CD4-positive, alpha-beta memory T cell (primary cell): ENCODE measurements at regions of chr20 and their contacts with region 1.

Region 1: GRCh38 chr20:45293041-45294002 is 13.3 kb upstream of the RBPJL start:
- DNase-seq: peak; percentile 70 to 77 (median 71)
- H3K4me3 ChIP-seq: peak overlapping the region; percentile 40 to 64
- H3K4me3 Mint-ChIP-seq: peak overlapping the region; percentile 68 to 84 (median 79)
- H3K27ac ChIP-seq: no peak overlapping the region
- H3K27ac Mint-ChIP-seq: no peak overlapping the region
- H3K4me1 ChIP-seq: peaks cover 11% of the 10 kb centered on the region
- H3K4me1 Mint-ChIP-seq: peaks cover 2 to 8% (median 4%) of the 10 kb centered on the region in 4 donors
- H3K27me3 ChIP-seq: no peaks in the 10 kb centered on the region
- H3K27me3 Mint-ChIP-seq: peaks cover 9 to 30% of the 10 kb centered on the region in 2 donors

Region 2: DNA sequence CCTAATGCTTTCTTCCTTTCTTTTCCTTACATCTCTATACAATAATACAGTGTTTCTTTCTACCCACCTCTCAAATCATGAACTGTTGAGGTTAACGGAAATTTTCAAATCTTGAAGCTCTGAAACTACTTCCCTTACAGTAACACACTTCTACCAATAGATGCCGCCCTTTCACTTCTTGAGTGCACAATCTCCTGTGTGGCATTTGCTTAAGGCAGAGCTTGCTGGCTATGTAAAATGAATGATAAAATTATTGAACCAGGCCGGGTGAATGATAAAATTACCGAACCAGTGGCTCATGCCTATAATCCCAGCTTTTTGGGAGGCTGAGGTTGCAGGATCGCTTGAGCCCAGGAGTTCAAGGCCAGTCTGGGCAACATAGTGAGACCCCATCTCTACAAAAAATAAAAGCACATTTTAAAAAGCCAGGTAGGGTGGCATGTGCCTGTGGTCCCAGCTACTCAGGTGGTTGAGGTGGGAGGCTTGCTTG is 249.2 kb before region 1 on chr20:
- CTCF ChIA-PET with region 1: interaction called, 14 read pairs
- POLR2A ChIA-PET with region 1: no interaction called
- intact Hi-C with region 1: loop called (anchors 2 kb)
- DNase-seq: peak; percentile 60 to 73 (median 64)
- H3K4me3 ChIP-seq: no peak overlapping the region
- H3K4me3 Mint-ChIP-seq: peak overlapping the region in 3 of 8 donors; percentile 1 to 17 (median 5)
- H3K27ac ChIP-seq: no peak overlapping the region
- H3K27ac Mint-ChIP-seq: peak overlapping the region; percentile 5 to 91 (median 58)
- H3K4me1 ChIP-seq: peaks cover 78% of the 10 kb centered on the region
- H3K4me1 Mint-ChIP-seq: peaks cover 49 to 85% (median 67%) of the 10 kb centered on the region in 4 donors
- H3K27me3 ChIP-seq: no peaks in the 10 kb centered on the region
- H3K27me3 Mint-ChIP-seq: no peaks in the 10 kb centered on the region

Region 3: DNA sequence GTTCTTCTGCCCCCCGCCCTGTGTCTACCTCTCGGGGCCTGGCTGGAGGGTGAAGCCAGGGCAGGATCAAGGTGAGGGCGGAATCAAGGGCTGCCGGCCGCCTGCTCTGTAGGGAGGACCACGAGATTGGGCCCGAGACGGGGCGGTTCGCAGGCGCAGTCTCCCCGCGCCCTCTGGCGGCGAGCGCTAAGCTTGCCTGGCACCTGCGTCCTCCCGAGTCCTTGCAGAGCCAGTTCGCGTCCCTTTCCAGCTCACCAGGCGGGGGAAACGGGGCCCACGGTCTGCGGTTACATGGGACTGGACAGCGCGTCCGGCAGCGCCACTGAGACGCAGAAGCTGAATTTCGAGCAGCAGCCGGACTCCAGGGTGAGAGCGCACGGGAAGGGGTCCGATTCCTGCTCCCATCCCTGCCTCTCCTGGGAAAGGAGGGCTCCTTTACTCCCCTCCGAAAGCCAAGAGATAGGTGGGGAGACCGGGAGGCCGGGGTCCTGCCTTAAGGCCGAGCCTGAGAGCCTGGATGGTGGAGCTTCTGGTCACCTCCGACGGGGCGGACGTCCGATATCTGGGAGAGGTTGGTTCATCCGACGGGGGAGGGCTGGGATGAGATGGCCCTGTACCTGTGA is 18.4 kb after region 1 on chr20:
- CTCF ChIA-PET with region 1: interaction called, 10 read pairs
- POLR2A ChIA-PET with region 1: no interaction called
- intact Hi-C with region 1: no loop called
- DNase-seq: peak in 4 of 5 donors; percentile 33 to 49 (median 40)
- H3K4me3 ChIP-seq: no peak overlapping the region
- H3K4me3 Mint-ChIP-seq: peak overlapping the region in 1 of 8 donors; percentile 4
- H3K27ac ChIP-seq: no peak overlapping the region
- H3K27ac Mint-ChIP-seq: no peak overlapping the region
- H3K4me1 ChIP-seq: peaks cover 6% of the 10 kb centered on the region
- H3K4me1 Mint-ChIP-seq: peaks cover 4 to 7% (median 6%) of the 10 kb centered on the region in 4 donors
- H3K27me3 ChIP-seq: no peaks in the 10 kb centered on the region
- H3K27me3 Mint-ChIP-seq: peaks cover 21 to 35% of the 10 kb centered on the region in 2 donors

Region 4: DNA sequence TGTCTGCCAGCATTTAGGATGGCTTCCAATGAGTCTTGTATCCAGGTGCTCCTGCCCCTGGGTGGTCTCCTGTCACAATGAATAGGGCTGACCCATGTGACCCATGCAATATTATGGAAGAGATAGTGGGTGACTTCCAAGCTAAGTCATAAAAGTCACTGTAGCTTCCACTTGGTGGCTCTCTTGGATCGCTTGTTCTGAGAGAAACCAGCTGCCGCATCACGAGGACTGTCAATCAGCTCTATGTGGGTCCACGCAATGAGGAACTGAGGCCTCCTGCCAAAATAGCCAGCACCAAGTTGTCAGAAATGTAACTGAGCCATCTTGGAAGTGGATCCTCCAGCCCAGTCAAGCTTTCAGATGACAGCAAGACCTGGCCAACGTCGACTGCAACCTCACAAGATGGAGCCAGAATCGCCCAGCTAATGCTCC is 29.6 kb after region 1 on chr20:
- CTCF ChIA-PET with region 1: interaction called, 58 read pairs
- POLR2A ChIA-PET with region 1: no interaction called
- intact Hi-C with region 1: no loop called
- DNase-seq: no peak
- H3K4me3 ChIP-seq: no peak overlapping the region
- H3K4me3 Mint-ChIP-seq: no peak overlapping the region
- H3K27ac ChIP-seq: no peak overlapping the region
- H3K27ac Mint-ChIP-seq: no peak overlapping the region
- H3K4me1 ChIP-seq: peaks cover 29% of the 10 kb centered on the region
- H3K4me1 Mint-ChIP-seq: peaks cover 13 to 32% (median 22%) of the 10 kb centered on the region in 4 donors
- H3K27me3 ChIP-seq: no peaks in the 10 kb centered on the region
- H3K27me3 Mint-ChIP-seq: no peaks in the 10 kb centered on the region

Region 5: DNA sequence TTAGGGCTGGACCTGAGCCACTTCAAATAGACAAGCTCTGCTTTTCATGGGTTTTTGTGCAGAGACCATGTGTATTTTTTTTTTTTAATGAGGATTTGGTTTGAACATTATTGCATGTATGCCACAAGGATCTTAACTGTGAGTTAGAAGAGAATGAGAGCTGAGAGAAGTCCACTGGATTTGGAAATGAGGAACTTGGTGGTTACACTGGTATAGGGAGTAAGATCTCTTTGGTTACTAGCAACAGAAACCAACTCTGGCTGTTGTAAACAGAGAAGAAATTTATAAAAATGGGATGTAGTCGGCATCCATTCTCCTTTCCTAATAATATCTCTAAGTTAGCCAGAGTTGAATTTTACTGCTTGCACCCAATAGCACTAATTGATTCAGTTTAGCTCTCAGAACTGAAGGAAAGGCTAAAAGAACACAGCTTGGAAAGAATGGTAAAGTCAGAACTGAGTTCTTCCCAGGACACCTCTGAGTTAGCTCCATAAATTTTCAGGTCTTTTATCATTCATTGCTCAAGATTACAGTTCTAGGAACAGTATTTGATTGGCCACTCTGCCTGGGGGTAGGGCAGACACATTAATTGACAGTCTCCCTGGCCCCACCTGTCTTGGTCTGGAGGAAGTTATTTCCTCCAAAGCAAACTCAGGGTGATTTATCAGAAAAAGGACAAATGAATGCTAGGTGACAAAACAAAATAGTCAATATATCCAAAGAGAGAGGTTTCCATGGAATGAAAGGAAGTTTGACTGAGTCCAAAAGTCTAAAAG is 172.4 kb after region 1 on chr20:
- CTCF ChIA-PET with region 1: interaction called, 11 read pairs
- POLR2A ChIA-PET with region 1: no interaction called
- intact Hi-C with region 1: no loop called
- DNase-seq: no peak
- H3K4me3 ChIP-seq: no peak overlapping the region
- H3K4me3 Mint-ChIP-seq: no peak overlapping the region
- H3K27ac ChIP-seq: no peak overlapping the region
- H3K27ac Mint-ChIP-seq: no peak overlapping the region
- H3K4me1 ChIP-seq: peaks cover 10% of the 10 kb centered on the region
- H3K4me1 Mint-ChIP-seq: peaks cover 0 to 2% (median under 1%) of the 10 kb centered on the region in 4 donors
- H3K27me3 ChIP-seq: peaks cover 19% of the 10 kb centered on the region
- H3K27me3 Mint-ChIP-seq: peaks cover 20 to 28% of the 10 kb centered on the region in 2 donors

Region 6: DNA sequence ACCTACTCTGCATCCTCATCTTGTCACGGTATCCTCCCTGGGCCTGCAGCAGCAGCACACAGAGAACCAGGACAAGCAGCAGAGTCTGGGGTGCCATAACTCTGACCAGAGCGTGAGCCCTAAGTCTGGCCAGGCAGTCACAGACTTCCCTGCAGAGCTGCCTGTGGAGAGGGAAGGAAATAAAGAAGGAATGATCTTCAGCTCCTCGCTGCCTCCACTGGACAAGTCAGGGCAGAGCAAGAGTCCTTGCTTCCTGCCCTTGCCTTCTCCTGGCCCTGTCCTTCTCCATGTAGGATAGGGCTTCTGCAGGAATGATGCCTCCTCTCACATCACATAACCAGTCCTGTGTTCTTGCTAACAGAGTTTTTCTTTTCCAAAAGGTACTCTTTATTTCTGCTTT is 392.6 kb after region 1 on chr20:
- CTCF ChIA-PET with region 1: no interaction called
- POLR2A ChIA-PET with region 1: no interaction called
- intact Hi-C with region 1: no loop called
- DNase-seq: no peak
- H3K4me3 ChIP-seq: no peak overlapping the region
- H3K4me3 Mint-ChIP-seq: no peak overlapping the region
- H3K27ac ChIP-seq: no peak overlapping the region
- H3K27ac Mint-ChIP-seq: no peak overlapping the region
- H3K4me1 ChIP-seq: no peaks in the 10 kb centered on the region
- H3K4me1 Mint-ChIP-seq: no peaks in the 10 kb centered on the region
- H3K27me3 ChIP-seq: no peaks in the 10 kb centered on the region
- H3K27me3 Mint-ChIP-seq: peaks cover 13 to 33% of the 10 kb centered on the region in 2 donors